Sigmoid colon (tissue), 7 donors: ENCODE measurements at regions of chr10 and their contacts with region 1.

Region 1: DNA sequence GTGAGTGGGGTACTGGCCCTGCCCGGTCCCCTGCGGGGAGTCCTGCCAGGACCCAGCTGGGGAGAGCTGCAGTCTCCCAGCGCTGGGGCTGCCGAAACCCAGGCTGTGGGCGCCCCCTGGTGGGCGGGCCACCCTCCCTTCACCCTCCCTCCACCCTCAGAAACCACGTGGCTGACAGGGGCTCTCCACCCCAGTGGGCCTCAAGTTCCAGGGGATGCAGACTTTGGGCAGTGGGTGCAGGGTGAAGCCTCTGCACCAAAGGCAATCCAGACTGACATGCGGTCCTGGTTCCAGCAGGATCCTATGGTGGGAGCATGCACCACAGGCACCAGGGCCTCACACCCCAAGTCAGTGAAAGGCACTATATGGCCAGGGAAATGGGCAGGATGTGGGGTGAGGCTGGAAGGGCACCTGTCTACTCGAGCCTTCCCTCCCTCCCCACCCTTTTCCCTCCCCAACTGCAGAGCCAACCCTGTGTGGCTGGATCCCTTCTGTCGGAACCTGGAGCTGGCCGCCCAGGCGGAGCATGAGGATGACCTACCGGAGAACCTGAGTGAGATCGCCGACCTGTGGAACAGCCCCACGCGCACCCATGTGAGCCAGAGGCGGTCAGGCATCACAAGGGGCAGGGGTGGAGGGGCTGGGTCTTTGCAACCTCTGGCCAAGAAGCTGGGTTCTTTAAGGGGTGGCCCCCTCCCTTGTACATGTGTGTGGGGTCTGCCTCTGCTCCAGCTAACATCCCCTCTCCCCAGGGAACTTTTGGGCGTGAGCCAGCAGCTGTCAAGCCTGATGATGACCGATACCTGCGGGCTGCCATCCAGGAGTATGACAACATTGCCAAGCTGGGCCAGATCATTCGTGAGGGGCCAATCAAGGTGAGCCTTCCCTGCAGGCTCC is 38.8 kb downstream of the PSAP start:
- DNase-seq: peak; percentile 78
- H3K4me3 ChIP-seq: no peak overlapping the region
- H3K27ac ChIP-seq: no peak overlapping the region
- H3K4me1 ChIP-seq: peaks cover 0 to 10% (median 6%) of the 10 kb centered on the region in 4 donors
- H3K27me3 ChIP-seq: peaks cover 0 to 8% (median 0%) of the 10 kb centered on the region in 3 donors
- CTCF ChIP-seq: peak; percentile 55 to 89 (median 82)
- EP300 ChIP-seq: no peak
- POLR2A ChIP-seq: no peak

Region 2: GRCh38 chr10:71383972-71384687 is 428.1 kb before region 1 on chr10:
- intact Hi-C with region 1: loop called (anchors 5 kb)
- DNase-seq: peak; percentile 83
- H3K4me3 ChIP-seq: no peak overlapping the region
- H3K27ac ChIP-seq: no peak overlapping the region
- H3K4me1 ChIP-seq: no peaks in the 10 kb centered on the region
- H3K27me3 ChIP-seq: no peaks in the 10 kb centered on the region
- CTCF ChIP-seq: peak; percentile 75 to 91 (median 87)
- EP300 ChIP-seq: no peak
- POLR2A ChIP-seq: no peak

Region 3: GRCh38 chr10:71396084-71396720 is 416.1 kb before region 1 on chr10:
- intact Hi-C with region 1: loop called (anchors 5 kb)
- DNase-seq: peak; percentile 75
- H3K4me3 ChIP-seq: peak overlapping the region; percentile 43 to 61 (median 52)
- H3K27ac ChIP-seq: peak overlapping the region in 3 of 4 donors; percentile 19 to 79 (median 63)
- H3K4me1 ChIP-seq: peaks cover 0 to 26% (median 18%) of the 10 kb centered on the region in 4 donors
- H3K27me3 ChIP-seq: peaks cover 23 to 46% (median 38%) of the 10 kb centered on the region in 3 donors
- CTCF ChIP-seq: peak; percentile 21 to 55 (median 38)
- EP300 ChIP-seq: no peak
- POLR2A ChIP-seq: no peak

Region 4: DNA sequence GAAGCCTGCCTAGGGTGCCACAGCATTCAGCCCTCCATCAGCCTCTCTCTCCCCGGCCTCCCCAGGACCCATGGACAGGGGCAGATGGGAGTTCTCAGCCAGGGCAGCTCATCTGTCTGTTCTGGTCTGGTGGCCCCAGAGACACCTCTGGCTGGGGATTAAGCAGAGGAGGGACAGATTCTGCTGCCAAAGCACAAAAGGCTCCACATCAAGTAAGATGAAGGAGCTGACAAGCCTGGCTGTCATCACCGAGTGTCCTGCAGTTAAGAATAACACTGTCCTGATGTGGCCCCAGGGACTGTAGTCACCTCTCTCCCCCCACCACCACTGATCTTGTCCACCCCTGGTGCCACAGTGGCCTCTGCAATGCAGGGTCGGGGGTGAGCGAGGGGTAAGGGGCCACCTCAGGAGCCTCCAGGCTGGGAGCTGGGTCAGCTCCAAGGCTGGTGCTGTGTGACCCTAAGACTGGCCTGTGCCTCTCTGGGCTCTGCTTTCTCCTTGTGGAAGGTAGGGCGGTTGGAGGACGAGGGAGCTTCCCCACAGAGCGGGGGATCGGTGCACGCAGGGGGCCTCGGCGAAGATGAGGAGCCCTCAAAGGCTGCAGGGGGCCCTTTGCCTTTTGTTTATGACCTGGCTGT is 111.4 kb before region 1 on chr10:
- intact Hi-C with region 1: loop called (anchors 5 kb)
- DNase-seq: no peak
- H3K4me3 ChIP-seq: no peak overlapping the region
- H3K27ac ChIP-seq: no peak overlapping the region
- H3K4me1 ChIP-seq: no peaks in the 10 kb centered on the region
- H3K27me3 ChIP-seq: no peaks in the 10 kb centered on the region
- CTCF ChIP-seq: no peak
- EP300 ChIP-seq: no peak
- POLR2A ChIP-seq: no peak